SK-N-SH (cell line): ENCODE measurements at regions of chr3 and their contacts with region 1.

Region 1: GRCh38 chr3:197256836-197257444 is 41.5 kb downstream of the DLG1 start:
- DNase-seq: peak; percentile 5
- H3K4me3 ChIP-seq: no peak overlapping the region
- H3K27ac ChIP-seq: peak overlapping the region in 1 of 2 experiments; percentile 28; a peak in 2 of 4 replicates
- H3K4me1 ChIP-seq: peaks cover 2 to 6% of the 10 kb centered on the region in 2 experiments; a peak in 3 of 4 replicates
- H3K27me3 ChIP-seq: no peaks in the 10 kb centered on the region
- CTCF ChIP-seq: peak; percentile 90
- EP300 ChIP-seq: no peak
- RAD21 ChIP-seq: peak; percentile 79

Region 2: GRCh38 chr3:196920733-196921132 is 336.2 kb before region 1 on chr3:
- CTCF ChIA-PET with region 1: no interaction called
- POLR2A ChIA-PET with region 1: no interaction called
- DNase-seq: no peak
- H3K4me3 ChIP-seq: no peak overlapping the region
- H3K27ac ChIP-seq: no peak overlapping the region
- H3K4me1 ChIP-seq: no peaks in the 10 kb centered on the region
- H3K27me3 ChIP-seq: no peaks in the 10 kb centered on the region
- CTCF ChIP-seq: no peak
- EP300 ChIP-seq: no peak
- RAD21 ChIP-seq: no peak

Region 3: DNA sequence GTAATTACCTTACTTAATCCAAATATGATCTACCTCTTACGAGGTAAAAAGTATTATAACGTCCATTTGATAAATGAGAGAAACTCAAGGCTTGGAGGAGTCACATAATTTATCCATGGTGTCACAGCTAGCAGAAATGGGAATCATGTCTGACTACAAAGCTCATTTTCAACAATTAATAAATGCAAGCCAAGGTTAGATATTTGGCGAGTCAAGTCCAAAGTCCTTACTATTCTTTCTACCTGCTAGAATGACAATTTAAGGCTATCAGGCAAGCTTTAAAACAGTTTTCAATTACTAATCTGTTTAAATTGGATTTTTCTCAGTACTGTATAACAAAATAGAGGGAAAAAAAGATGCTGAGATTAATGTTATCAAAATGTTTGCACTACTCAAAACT is 27.1 kb before region 1 on chr3:
- CTCF ChIA-PET with region 1: interaction called, 33 read pairs
- POLR2A ChIA-PET with region 1: no interaction called
- DNase-seq: no peak
- H3K4me3 ChIP-seq: no peak overlapping the region
- H3K27ac ChIP-seq: no peak overlapping the region
- H3K4me1 ChIP-seq: peaks cover 0 to 14% of the 10 kb centered on the region in 2 experiments; a peak in 2 of 4 replicates
- H3K27me3 ChIP-seq: no peaks in the 10 kb centered on the region
- CTCF ChIP-seq: no peak
- EP300 ChIP-seq: no peak
- RAD21 ChIP-seq: no peak

Region 4: GRCh38 chr3:197268294-197268693 is 11.4 kb after region 1 on chr3:
- CTCF ChIA-PET with region 1: interaction called, 24 read pairs
- POLR2A ChIA-PET with region 1: no interaction called
- DNase-seq: no peak
- H3K4me3 ChIP-seq: no peak overlapping the region
- H3K27ac ChIP-seq: no peak overlapping the region
- H3K4me1 ChIP-seq: peaks cover 0 to 4% of the 10 kb centered on the region in 2 experiments; a peak in 2 of 4 replicates
- H3K27me3 ChIP-seq: no peaks in the 10 kb centered on the region
- CTCF ChIP-seq: no peak
- EP300 ChIP-seq: no peak
- RAD21 ChIP-seq: no peak

Region 5: GRCh38 chr3:197354319-197355001 is 97.5 kb after region 1 on chr3:
- CTCF ChIA-PET with region 1: interaction called, 12 read pairs
- POLR2A ChIA-PET with region 1: no interaction called
- DNase-seq: peak; percentile 49
- H3K4me3 ChIP-seq: no peak overlapping the region
- H3K27ac ChIP-seq: peak overlapping the region in 1 of 2 experiments; percentile 36; a peak in 1 of 4 replicates
- H3K4me1 ChIP-seq: peaks cover 0 to 29% of the 10 kb centered on the region in 2 experiments; a peak in 1 of 4 replicates
- H3K27me3 ChIP-seq: no peaks in the 10 kb centered on the region
- CTCF ChIP-seq: no peak
- EP300 ChIP-seq: no peak
- RAD21 ChIP-seq: no peak

Region 6: DNA sequence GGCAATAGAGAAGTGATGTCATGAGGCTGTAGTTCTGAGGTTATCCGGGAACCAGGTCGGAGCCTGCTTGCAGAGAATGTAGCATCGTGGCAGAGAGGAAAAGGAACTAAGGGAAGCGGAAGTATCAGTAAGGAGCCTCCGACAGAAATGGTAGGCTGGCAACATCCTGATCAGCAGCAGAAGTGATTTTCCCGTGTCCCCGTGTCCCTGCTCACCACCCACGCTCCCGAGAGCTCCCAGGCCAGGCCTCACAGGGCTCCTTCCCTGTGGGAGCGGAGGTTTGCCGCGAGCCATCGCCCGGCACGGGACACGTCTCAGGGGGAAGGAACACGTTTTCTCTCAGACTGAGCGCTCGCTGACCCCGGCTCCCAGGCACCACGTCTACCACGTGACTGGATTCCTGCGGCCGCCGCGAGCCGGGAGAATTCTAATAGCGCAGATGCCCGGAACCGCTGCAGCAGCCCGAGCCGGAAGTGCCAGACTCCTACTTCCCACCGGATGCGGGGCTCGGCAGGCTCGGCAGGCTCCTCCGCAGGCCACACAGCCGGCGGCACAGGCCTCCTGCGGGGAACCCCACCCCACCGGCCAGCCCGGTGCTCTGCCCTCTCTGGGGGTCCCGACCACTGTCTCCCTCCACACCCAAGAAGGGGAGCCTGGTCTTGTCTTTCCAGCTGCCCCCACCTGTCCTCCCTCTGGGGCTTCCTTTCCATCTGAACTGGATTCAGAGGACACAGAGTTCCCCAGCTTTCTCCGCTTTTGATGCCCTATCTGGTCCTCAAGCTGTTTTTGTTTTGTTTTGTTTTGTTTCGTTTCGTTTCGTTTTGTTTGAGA is 199.5 kb after region 1 on chr3:
- CTCF ChIA-PET with region 1: interaction called, 47 read pairs
- POLR2A ChIA-PET with region 1: no interaction called
- DNase-seq: no peak
- H3K4me3 ChIP-seq: no peak overlapping the region
- H3K27ac ChIP-seq: no peak overlapping the region
- H3K4me1 ChIP-seq: peaks cover 0 to 8% of the 10 kb centered on the region in 2 experiments; a peak in 1 of 4 replicates
- H3K27me3 ChIP-seq: no peaks in the 10 kb centered on the region
- CTCF ChIP-seq: no peak
- EP300 ChIP-seq: no peak
- RAD21 ChIP-seq: no peak

Region 7: GRCh38 chr3:197511130-197511529 is 254.2 kb after region 1 on chr3:
- CTCF ChIA-PET with region 1: interaction called, 110 read pairs
- POLR2A ChIA-PET with region 1: no interaction called
- DNase-seq: no peak
- H3K4me3 ChIP-seq: no peak overlapping the region
- H3K27ac ChIP-seq: peak overlapping the region in 1 of 2 experiments; percentile 68; a peak in 2 of 4 replicates
- H3K4me1 ChIP-seq: peaks cover under 1 to 17% of the 10 kb centered on the region in 2 experiments; a peak in 2 of 4 replicates
- H3K27me3 ChIP-seq: no peaks in the 10 kb centered on the region
- CTCF ChIP-seq: no peak
- EP300 ChIP-seq: no peak
- RAD21 ChIP-seq: no peak

Region 8: DNA sequence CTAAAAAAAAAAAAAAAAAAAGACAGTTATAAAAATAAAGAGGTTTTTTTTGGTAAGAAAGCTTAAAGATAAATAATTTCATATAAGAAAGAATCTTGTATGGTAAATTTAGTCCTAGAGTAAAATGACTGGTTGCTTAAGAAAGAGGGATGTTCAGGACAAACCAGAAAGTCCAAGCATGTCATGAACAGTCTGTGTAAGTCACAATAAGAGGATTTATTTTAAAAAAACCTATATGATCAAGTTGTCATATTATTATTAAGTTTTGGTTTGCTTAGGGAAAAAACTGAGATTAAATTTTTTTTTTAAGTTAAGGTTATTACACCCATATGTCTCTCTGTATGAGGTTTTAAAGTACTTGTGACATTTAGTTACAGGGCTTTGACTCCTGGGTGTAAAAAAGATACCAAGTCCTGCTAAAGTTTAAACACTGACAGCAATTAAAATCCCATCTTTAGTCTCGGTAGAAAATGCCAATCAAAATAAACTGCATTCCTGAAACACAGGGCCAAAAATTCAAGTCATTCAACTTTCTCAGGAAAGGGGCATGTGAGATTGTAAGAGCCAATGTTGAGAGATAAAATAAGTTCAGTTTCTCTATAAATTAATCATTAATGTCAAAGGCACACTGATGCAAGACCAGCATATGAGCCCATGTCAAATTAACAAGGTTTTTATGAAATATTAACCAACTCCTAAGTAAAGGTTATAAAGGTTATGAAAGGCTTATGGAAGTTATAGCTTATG is 307.3 kb after region 1 on chr3:
- CTCF ChIA-PET with region 1: no interaction called
- POLR2A ChIA-PET with region 1: no interaction called
- DNase-seq: no peak
- H3K4me3 ChIP-seq: no peak overlapping the region
- H3K27ac ChIP-seq: no peak overlapping the region
- H3K4me1 ChIP-seq: peaks cover 0 to 7% of the 10 kb centered on the region in 2 experiments; a peak in 1 of 4 replicates
- H3K27me3 ChIP-seq: no peaks in the 10 kb centered on the region; the same call in 1 of the 2 replicates
- CTCF ChIP-seq: no peak
- EP300 ChIP-seq: no peak
- RAD21 ChIP-seq: no peak